ENCODE measurements at regions of chr12 and their contacts with region 1.

Region 1: GRCh38 chr12:127677537-127678131 is 589.3 kb upstream of the TMEM132C start:
- DNase-seq: peak; percentile 65 to 81 (median 70)
- H3K4me3 ChIP-seq: no peak overlapping the region
- H3K27ac ChIP-seq: no peak overlapping the region
- H3K4me1 ChIP-seq: no peaks in the 10 kb centered on the region
- H3K27me3 ChIP-seq: no peaks in the 10 kb centered on the region

Region 2: GRCh38 chr12:127925971-127926370 is 248.3 kb after region 1 on chr12:
- CTCF ChIA-PET with region 1: interaction called, 11 read pairs
- POLR2A ChIA-PET with region 1: no interaction called
- DNase-seq: peak; percentile 19 to 46 (median 41)
- H3K4me3 ChIP-seq: no peak overlapping the region
- H3K27ac ChIP-seq: no peak overlapping the region
- H3K4me1 ChIP-seq: peaks cover 0 to 22% (median 6%) of the 10 kb centered on the region in 4 experiments
- H3K27me3 ChIP-seq: peaks cover 0 to 2% (median 0%) of the 10 kb centered on the region in 5 experiments

Region 3: DNA sequence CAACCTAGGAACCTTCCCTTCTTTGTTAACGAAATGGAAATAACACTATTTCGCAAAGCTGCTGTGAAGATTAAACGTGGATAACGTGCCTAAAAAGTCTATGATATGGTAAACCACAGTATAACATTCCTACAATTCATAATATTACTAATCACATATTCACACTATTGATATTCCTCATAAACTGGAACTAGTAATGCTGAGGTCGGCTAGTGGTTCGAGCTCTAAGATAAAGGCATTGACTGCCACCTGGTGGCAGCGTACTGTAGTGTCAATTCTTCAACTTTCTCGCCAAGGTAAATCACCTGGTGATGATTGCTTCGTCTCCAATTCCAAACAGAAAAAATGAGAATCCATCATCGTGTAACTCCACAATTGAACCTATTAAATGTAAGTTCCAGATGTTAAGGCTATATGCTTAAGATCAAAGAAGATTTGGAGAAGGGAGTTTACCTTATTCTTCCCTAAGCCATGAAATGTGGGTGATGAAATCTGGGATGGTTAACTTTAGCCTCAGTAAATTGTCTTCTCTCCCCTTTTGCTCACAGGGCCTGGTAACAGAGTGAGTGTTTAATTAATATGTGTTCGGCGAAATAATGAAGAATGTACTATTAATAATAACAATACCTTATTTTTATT is 391.8 kb after region 1 on chr12:
- CTCF ChIA-PET with region 1: interaction called, 11 read pairs
- POLR2A ChIA-PET with region 1: no interaction called
- DNase-seq: peak; percentile 35 to 70 (median 62)
- H3K4me3 ChIP-seq: no peak overlapping the region
- H3K27ac ChIP-seq: no peak overlapping the region
- H3K4me1 ChIP-seq: no peaks in the 10 kb centered on the region
- H3K27me3 ChIP-seq: no peaks in the 10 kb centered on the region

Measured in common myeloid progenitor, CD34-positive (primary cell).